H1 (cell line): ENCODE measurements at regions of chr12 and their contacts with region 1.

Region 1: DNA sequence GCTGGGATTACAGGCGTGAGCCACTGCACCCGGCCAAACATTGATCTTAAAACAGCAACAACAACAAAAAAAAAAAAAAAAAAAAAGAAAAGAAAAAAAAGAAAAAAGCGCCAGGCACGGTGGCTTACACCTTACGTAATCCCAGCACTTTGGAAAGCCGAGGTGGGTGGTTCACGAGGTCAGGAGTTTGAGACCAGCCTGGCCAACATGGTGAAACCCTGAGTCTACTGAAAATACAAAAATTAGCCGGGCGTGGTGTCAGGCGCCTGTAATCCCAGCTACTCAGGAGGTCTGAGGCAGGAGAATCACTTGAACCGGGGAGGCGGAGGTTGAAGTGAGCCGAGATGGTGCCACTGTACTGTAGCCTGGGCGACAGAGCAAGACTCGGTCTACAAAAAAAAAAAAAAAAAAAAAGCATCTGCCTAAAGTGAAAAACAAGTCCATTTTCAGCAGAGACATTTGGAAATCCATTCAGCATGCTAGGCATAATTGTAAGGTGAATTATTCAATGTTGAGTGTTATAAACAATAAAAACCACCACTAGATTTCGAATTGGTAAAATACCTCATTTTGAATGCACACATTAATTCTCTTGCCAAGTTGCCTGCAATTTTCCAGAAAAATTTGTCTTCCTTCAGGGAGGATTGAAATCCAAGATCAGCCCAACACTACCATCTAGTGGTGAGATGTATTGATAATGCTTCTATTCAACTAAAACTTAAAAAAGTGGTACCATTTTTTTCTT is 8.0 kb upstream of the CERS5 start:
- DNase-seq: no peak
- H3K4me3 ChIP-seq: no peak overlapping the region
- H3K27ac ChIP-seq: no peak overlapping the region
- H3K4me1 ChIP-seq: no peaks in the 10 kb centered on the region
- H3K27me3 ChIP-seq: no peaks in the 10 kb centered on the region
- CTCF ChIP-seq: peak in 2 of 3 experiments; percentile 38 to 50; a peak in 2 of 4 replicates
- EP300 ChIP-seq: no peak
- POLR2A ChIP-seq: no peak
- RAD21 ChIP-seq: peak; percentile 71 to 73

Region 2: GRCh38 chr12:50074936-50075807 is 100.0 kb before region 1 on chr12:
- CTCF ChIA-PET with region 1: interaction called, 15 read pairs
- POLR2A ChIA-PET with region 1: no interaction called
- DNase-seq: peak in 1 of 2 experiments; percentile 93
- H3K4me3 ChIP-seq: no peak overlapping the region
- H3K27ac ChIP-seq: no peak overlapping the region
- H3K4me1 ChIP-seq: peaks cover 0 to 6% (median 3%) of the 10 kb centered on the region in 4 experiments; a peak in 5 of 7 replicates
- H3K27me3 ChIP-seq: peaks cover 0 to 4% (median under 1%) of the 10 kb centered on the region in 4 experiments; a peak in 2 of 7 replicates
- CTCF ChIP-seq: peak; percentile 92 to 94 (median 94)
- EP300 ChIP-seq: no peak
- POLR2A ChIP-seq: no peak
- RAD21 ChIP-seq: peak; percentile 96 to 97

Region 3: DNA sequence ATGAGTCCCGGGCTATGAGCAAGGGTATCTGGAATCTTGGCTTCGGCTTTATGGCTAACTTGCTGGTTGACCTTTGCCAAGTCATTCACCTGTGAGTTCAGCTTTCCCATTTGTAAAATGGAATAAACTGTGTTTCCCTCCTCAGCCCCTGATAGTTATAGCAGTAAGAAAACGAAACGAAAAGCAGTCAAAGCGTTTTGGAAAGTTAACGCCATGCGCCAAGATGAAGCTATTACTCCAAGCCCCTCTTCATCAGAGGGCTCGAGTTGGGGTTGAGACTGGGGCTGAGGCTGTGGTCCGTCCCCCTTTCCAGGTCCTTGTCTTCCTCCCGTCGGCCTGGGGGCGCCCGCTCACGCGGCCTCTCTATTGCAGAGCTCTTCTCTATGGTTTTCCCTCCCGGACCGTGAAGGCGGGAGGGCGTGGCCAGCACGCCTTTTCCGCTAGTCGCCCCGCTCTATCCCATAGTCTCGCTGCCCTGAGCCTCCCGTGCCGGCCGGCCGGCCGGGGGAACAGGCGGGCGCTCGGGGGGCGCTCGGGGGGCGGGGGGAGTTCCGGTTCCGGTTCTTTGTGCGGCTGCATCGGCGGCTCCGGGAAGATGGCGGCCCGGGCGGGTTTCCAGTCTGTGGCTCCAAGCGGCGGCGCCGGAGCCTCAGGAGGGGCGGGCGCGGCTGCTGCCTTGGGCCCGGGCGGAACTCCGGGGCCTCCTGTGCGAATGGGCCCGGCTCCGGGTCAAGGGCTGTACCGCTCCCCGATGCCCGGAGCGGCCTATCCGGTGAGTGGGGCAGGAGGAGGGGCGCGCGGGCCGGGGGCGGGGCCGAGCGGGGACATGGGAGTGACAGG is 90.1 kb before region 1 on chr12 and contains the start of gene SMARCD1:
- CTCF ChIA-PET with region 1: interaction called, 16 read pairs
- POLR2A ChIA-PET with region 1: interaction called, 7 read pairs
- DNase-seq: peak; percentile 93 to 94
- H3K4me3 ChIP-seq: peak within 1 kb of the TSS; percentile 42 to 88 (median 77)
- H3K27ac ChIP-seq: peak within 1 kb of the TSS; percentile 68; the same call in 1 of the 2 replicates
- H3K4me1 ChIP-seq: peaks cover 0 to 8% (median 5%) of the 10 kb centered on the region in 4 experiments; a peak in 3 of 7 replicates
- H3K27me3 ChIP-seq: peaks cover 0 to 15% (median 8%) of the 10 kb centered on the region in 4 experiments; a peak in 4 of 7 replicates
- CTCF ChIP-seq: peak; percentile 71 to 82 (median 74)
- EP300 ChIP-seq: no peak
- POLR2A ChIP-seq: peak; percentile 57 to 62
- RAD21 ChIP-seq: no peak
- total RNA-seq, gene SMARCD1: 128 and 140 TPM in 2 replicates

Region 4: DNA sequence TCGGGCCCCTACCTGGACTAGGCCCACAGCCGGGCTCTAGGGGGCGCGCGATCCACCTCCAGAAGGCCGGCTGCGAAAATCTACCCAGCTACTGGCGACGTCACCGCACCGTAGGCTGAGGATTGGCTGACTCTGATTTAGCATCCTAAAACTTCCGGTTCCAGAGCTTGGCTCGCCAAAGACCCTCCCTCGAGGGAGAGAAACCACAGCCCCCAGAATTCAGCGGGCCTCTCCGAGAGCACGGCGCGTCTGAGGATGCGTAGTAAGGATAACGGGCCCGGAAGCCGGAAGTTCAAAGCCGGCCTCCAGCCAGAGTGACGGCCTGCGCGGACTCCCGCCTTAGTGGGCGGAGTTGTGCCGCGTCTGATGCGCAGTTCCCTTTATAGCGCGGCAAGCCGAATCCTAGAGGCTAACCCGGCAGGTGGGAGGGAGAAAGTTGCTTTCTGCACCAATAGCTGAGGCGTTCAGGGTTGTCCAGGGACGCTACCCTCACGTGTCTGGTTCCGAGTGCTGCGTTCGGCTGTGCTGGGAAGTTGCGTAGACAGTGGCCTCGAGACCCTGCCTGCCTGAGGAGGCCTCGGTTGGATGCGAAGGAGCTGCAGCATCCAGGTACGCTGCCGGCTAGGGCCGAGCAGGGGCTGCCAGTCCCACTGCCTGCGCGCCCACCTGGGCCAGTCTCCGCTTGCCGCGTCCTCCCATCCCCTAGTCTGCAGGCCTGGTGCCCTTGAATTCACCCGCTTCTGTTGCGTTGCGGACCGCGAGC is 63.3 kb before region 1 on chr12 and contains the start of gene COX14:
- CTCF ChIA-PET with region 1: interaction called, 135 read pairs
- POLR2A ChIA-PET with region 1: interaction called, 15 read pairs
- DNase-seq: peak; percentile 99 to 100
- H3K4me3 ChIP-seq: peak within 1 kb of the TSS; percentile 67 to 96 (median 88)
- H3K27ac ChIP-seq: peak within 1 kb of the TSS; percentile 74
- H3K4me1 ChIP-seq: peaks cover 10 to 15% (median 12%) of the 10 kb centered on the region in 4 experiments
- H3K27me3 ChIP-seq: no peaks in the 10 kb centered on the region
- CTCF ChIP-seq: peak; percentile 81 to 93 (median 81)
- EP300 ChIP-seq: 0 out of 3 replicates have a peak, but pooled peaks of 1 of the 2 experiments have one; percentile 37
- POLR2A ChIP-seq: peak in 1 of 2 experiments; percentile 93; a peak in 2 of 3 replicates
- RAD21 ChIP-seq: peak; percentile 52 to 55
- total RNA-seq, gene COX14: 38.5 and 40.1 TPM in 2 replicates

Region 5: GRCh38 chr12:50132505-50133135 is 42.5 kb before region 1 on chr12:
- CTCF ChIA-PET with region 1: interaction called, 38 read pairs
- POLR2A ChIA-PET with region 1: no interaction called
- DNase-seq: no peak
- H3K4me3 ChIP-seq: no peak overlapping the region
- H3K27ac ChIP-seq: no peak overlapping the region
- H3K4me1 ChIP-seq: no peaks in the 10 kb centered on the region
- H3K27me3 ChIP-seq: no peaks in the 10 kb centered on the region
- CTCF ChIP-seq: peak in 2 of 3 experiments; percentile 33 to 38; a peak in 2 of 4 replicates
- EP300 ChIP-seq: no peak
- POLR2A ChIP-seq: no peak
- RAD21 ChIP-seq: peak; percentile 49 to 56; a peak in 3 of 4 replicates

Region 6: GRCh38 chr12:50162230-50162629 is 12.9 kb before region 1 on chr12:
- CTCF ChIA-PET with region 1: interaction called, 19 read pairs
- POLR2A ChIA-PET with region 1: interaction called, 4 read pairs
- DNase-seq: no peak
- H3K4me3 ChIP-seq: no peak overlapping the region
- H3K27ac ChIP-seq: no peak overlapping the region
- H3K4me1 ChIP-seq: no peaks in the 10 kb centered on the region
- H3K27me3 ChIP-seq: no peaks in the 10 kb centered on the region
- CTCF ChIP-seq: no peak
- EP300 ChIP-seq: no peak
- POLR2A ChIP-seq: no peak
- RAD21 ChIP-seq: no peak

Region 7: DNA sequence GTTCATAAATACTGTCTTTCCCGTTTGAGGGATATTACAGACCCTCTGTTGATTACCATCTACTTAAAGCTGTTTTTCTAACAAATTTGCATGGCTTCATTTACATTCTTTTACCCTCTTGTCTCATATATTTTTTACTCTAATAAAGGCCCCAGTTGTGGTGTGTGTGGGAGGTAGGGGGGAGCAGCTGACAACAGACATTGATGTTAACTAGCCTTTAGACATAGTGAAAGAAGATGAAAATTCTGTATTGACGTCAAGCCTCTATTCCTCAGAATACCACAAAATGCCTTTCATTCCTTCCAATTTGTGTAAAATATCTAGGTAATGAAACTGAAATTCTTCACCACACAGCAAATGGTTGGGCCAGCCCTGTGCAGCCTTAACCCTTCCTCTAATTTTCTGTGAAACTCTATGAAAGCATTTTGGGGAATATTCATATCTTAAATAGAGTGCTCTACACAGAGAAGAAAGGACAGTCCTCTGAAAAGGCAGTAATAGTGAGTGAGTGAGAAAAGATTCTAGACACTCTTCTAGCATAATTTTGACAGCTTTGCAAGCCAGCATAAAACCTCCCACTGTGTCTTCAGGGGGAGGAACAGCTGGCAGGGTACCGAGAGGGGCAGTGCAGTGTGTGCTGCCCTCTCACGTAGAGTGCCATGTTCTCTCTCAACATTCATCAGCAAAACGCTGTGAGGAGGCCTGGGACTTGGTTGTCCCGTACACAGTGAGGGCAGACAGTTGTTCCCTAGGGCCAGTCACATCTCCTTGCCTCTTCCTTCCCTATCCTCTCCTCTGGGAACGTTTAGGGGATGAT is 12.1 kb after region 1 on chr12:
- CTCF ChIA-PET with region 1: interaction called, 13 read pairs
- POLR2A ChIA-PET with region 1: no interaction called
- DNase-seq: no peak
- H3K4me3 ChIP-seq: no peak overlapping the region
- H3K27ac ChIP-seq: no peak overlapping the region
- H3K4me1 ChIP-seq: no peaks in the 10 kb centered on the region
- H3K27me3 ChIP-seq: no peaks in the 10 kb centered on the region
- CTCF ChIP-seq: no peak
- EP300 ChIP-seq: no peak
- POLR2A ChIP-seq: no peak
- RAD21 ChIP-seq: no peak

Region 8: GRCh38 chr12:50215033-50215432 is 39.9 kb after region 1 on chr12:
- CTCF ChIA-PET with region 1: no interaction called
- POLR2A ChIA-PET with region 1: no interaction called
- DNase-seq: no peak
- H3K4me3 ChIP-seq: no peak overlapping the region
- H3K27ac ChIP-seq: no peak overlapping the region
- H3K4me1 ChIP-seq: no peaks in the 10 kb centered on the region; a peak in 1 of 7 replicates
- H3K27me3 ChIP-seq: no peaks in the 10 kb centered on the region
- CTCF ChIP-seq: no peak
- EP300 ChIP-seq: no peak
- POLR2A ChIP-seq: no peak
- RAD21 ChIP-seq: no peak

Region 9: GRCh38 chr12:51011955-51012354 is 836.8 kb after region 1 on chr12:
- CTCF ChIA-PET with region 1: no interaction called
- POLR2A ChIA-PET with region 1: no interaction called
- DNase-seq: no peak
- H3K4me3 ChIP-seq: no peak overlapping the region
- H3K27ac ChIP-seq: no peak overlapping the region
- H3K4me1 ChIP-seq: peaks cover 0 to 4% (median 2%) of the 10 kb centered on the region in 4 experiments; a peak in 3 of 7 replicates
- H3K27me3 ChIP-seq: no peaks in the 10 kb centered on the region
- CTCF ChIP-seq: no peak
- EP300 ChIP-seq: no peak
- POLR2A ChIP-seq: no peak
- RAD21 ChIP-seq: no peak